ENCODE measurements at regions of chr6 and their contacts with region 1.

Region 1: DNA sequence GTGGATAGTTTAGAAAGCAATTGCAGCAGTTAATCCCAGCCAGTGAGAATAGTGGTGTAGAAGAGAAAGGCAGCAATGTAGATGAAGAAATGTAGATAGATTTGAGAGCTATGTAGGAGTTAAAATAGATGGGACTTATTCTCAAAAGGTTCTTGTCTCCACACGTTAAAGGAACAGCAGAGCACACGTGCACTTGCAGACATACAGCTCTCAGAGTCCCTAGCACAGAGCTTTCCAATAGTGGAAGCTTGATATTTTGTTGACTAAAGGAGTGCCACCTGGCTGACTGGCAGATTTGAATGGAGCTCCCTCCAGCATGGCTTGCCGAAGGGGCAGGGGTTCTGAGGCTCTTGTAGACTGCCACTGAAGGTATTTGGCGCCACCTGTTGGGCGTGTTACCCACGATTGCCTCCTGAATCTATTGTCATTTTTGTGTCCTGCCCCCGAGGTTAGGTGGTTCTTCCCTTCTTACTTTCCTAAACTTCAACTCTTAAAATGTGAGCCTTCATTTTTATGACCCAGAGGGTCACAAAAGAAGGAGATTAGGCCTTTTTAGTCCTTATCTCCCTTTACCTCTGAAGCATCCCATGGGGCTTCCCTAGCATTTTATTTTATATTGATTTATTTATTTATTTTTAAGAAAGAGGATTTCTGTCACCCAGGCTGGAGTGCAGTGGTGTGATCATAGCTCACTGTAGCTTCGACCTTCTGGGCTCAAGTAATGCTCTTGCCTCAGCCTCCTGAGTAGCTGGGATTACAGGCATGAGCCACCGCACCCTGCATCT is 16.4 kb downstream of the BRD2 start:
- DNase-seq: peak; percentile 83 to 93 (median 92)
- H3K4me3 ChIP-seq: no peak overlapping the region
- H3K27ac ChIP-seq: no peak overlapping the region
- H3K4me1 ChIP-seq: peaks cover 1% of the 10 kb centered on the region
- H3K27me3 ChIP-seq: no peaks in the 10 kb centered on the region
- CTCF ChIP-seq: peak; percentile 69 to 83 (median 78)
- EP300 ChIP-seq: no peak
- POLR2A ChIP-seq: no peak

Region 2: GRCh38 chr6:32885698-32886286 is 99.0 kb before region 1 on chr6:
- intact Hi-C with region 1: loop called (anchors 2 to 5 kb)
- DNase-seq: no peak
- H3K4me3 ChIP-seq: no peak overlapping the region
- H3K27ac ChIP-seq: no peak overlapping the region
- H3K4me1 ChIP-seq: peaks cover 6% of the 10 kb centered on the region
- H3K27me3 ChIP-seq: no peaks in the 10 kb centered on the region
- CTCF ChIP-seq: peak; percentile 29 to 72 (median 63)
- EP300 ChIP-seq: no peak
- POLR2A ChIP-seq: no peak

Region 3: DNA sequence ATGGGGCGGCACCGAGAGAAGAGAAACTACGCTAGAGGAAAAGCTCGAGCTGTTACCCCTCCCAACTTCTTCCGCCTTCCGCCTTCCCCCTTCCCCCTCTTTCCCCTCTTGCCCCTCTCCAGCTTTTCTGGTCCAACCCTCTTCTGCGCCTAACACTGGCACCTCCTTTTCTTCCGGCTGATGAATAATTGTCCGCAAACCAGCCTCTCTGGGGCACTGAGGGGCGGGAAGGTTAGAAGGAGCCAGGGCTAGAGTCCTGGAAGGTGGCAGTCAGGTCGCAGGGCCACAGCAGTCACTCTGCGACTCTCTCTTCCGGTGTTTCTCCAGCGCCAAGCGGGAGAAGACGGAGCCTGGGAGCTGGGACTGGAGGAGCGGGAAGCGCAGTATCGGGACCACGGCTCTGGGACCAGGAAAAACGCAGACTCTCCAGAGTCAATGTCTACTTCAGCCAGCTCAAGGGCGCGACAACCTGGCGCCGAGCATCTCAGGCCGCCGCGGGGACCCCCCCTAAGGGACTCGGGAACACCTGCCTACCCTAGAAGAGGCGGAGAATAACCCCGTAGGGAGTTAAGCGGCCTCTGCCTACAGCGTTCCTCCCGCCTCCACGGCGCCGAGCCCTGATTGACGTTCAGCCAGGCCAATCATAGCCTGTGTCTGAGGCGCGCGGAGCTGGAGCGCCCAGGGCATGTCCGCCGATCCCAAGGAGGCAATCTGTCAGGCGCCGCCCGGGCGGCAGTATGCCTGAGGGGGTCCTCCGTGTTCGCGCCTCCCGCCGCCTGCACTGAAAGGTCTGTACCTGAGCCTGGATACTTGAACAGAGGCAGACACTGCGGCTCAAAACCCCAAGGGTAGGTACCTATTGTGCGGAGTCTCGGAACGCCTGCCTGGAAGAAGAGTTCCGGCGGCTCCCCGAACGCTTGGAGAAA is 90.5 kb before region 1 on chr6:
- intact Hi-C with region 1: loop called in 3 of 4 experiments (anchors 5 kb)
- DNase-seq: peak; percentile 92 to 97 (median 95)
- H3K4me3 ChIP-seq: peak overlapping the region; percentile 63
- H3K27ac ChIP-seq: peak overlapping the region; percentile 86 to 87
- H3K4me1 ChIP-seq: peaks cover 8% of the 10 kb centered on the region
- H3K27me3 ChIP-seq: no peaks in the 10 kb centered on the region
- CTCF ChIP-seq: no peak
- EP300 ChIP-seq: no peak
- POLR2A ChIP-seq: peak; percentile 74

Region 4: DNA sequence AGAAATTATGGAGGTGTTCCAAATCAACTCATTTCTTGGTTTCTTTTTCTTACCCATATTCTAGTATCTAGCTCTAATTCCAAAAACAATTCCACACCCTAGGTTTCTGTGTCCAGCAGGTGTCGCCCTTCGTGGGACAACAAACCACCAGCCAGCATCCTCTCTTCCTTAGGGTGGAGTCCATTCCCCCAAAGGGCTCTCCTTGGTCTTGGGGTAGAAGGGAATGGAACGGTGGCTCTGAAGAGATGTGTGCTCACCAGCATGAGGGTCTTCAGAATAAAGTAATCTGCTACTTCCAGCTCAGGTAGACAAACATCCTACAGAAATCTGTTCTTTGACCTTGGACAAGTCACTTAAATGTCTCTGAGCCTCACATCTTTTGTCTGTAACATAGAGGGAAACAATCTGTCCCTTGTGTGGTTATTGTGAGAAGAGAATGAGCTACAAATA is 51.1 kb before region 1 on chr6:
- intact Hi-C with region 1: loop called (anchors 2 to 5 kb)
- DNase-seq: peak; percentile 66 to 83 (median 80)
- H3K4me3 ChIP-seq: no peak overlapping the region
- H3K27ac ChIP-seq: no peak overlapping the region
- H3K4me1 ChIP-seq: no peaks in the 10 kb centered on the region
- H3K27me3 ChIP-seq: no peaks in the 10 kb centered on the region
- CTCF ChIP-seq: peak; percentile 38 to 70 (median 63)
- EP300 ChIP-seq: no peak
- POLR2A ChIP-seq: no peak

Region 5: GRCh38 chr6:33029328-33030184 is 44.8 kb after region 1 on chr6:
- intact Hi-C with region 1: no loop called
- DNase-seq: no peak
- H3K4me3 ChIP-seq: no peak overlapping the region
- H3K27ac ChIP-seq: no peak overlapping the region
- H3K4me1 ChIP-seq: no peaks in the 10 kb centered on the region
- H3K27me3 ChIP-seq: no peaks in the 10 kb centered on the region
- CTCF ChIP-seq: no peak
- EP300 ChIP-seq: no peak
- POLR2A ChIP-seq: no peak

Region 6: DNA sequence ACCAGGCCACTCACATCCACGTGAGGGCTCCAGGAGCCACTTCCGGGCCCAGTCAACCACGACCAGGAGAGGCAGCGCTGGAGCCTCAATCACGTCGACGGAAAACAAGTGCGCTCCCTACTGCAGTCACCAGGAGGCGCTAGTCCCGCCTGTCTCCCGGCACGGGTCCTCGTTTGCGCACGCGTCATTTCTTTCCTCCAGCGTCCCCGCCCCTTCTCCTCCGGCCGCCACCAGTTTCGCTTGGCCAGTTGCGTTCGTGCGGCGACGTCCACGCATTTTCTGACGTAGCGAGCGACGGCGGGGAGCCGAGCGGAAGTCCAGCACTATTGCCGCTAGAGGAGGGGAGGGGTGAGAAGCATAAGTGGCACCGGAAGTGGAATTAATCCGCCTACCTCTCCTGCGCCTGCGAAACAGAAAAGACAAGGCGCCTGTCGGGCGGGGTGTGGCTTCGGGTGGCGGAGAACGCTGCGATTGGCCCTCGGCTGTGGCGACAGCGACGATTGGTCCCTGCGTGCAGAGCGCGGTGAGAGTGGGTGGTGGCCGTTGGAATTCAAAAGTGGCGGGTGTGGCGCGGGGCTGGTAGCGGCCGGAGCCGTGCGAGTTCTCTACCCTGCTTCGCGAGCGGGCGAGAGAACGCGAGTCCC is 406.6 kb after region 1 on chr6 and contains the start of gene KIFC1:
- intact Hi-C with region 1: no loop called
- DNase-seq: peak; percentile 99 to 100 (median 99)
- H3K4me3 ChIP-seq: peak within 1 kb of the TSS; percentile 67
- H3K27ac ChIP-seq: peak within 1 kb of the TSS; percentile 84 to 90
- H3K4me1 ChIP-seq: peaks cover 6% of the 10 kb centered on the region
- H3K27me3 ChIP-seq: no peaks in the 10 kb centered on the region
- CTCF ChIP-seq: peak; percentile 98 to 99 (median 99)
- EP300 ChIP-seq: peak; percentile 87
- POLR2A ChIP-seq: no peak
- total RNA-seq, gene KIFC1: 0.60 to 3.9 (median 2.2) TPM

Measured in ovary (tissue), 10 donors.